Activated CD4-positive, alpha-beta memory T cell treated with anti-CD3 and anti-CD28 coated beads, Interleukin-2, amount 10 ng/mL, durations not matched to agents 7 days and 5 days (primary cell): ENCODE measurements at regions of chr2 and their contacts with region 1.

Region 1: DNA sequence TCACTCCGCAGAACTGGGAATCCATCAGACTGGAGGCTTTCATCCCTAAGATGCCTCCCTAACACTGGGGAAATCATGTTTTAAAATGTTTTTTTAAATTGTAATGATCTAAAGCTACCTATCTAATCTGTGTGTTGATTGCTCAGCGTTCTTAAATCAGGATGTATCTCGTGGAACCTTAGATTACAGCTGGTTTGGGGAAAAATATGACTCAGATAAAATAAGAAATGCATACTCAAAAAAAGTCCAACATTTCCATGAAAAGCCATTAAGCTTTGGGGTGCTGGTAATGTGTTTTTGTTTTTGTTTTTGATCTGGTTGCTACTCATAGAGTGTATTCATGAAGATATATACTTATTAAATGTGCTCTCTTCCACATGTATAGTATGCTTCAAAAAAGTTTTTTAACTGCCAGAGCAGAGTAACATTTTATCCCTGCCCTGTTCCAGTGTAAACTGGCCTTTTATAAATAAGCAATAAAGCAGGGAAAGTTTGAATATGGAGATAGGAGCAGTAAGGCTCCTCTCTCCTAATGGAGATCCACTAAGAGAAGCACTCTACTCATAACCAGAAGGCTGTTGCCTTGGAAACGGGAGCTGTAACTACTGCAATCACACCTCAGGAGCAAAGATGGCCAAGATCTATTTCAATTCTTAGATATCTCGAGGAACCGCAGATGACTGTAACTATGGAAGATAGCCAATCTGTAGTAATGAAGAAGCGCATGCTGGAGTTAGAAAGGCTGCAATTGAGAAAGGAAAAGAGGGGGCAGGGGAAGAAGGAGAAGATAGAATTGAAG is 41.6 kb downstream of the ANKRD44 start:
- DNase-seq: peak; percentile 39
- H3K4me3 Mint-ChIP-seq: no peak overlapping the region
- H3K27ac Mint-ChIP-seq: peak overlapping the region; percentile 17
- H3K4me1 Mint-ChIP-seq: peaks cover 89% of the 10 kb centered on the region
- H3K27me3 Mint-ChIP-seq: no peaks in the 10 kb centered on the region

Region 2: GRCh38 chr2:197278799-197279763 is 10.1 kb after region 1 on chr2:
- CTCF ChIA-PET with region 1: interaction called, 5 read pairs
- POLR2A ChIA-PET with region 1: interaction called, 11 read pairs
- DNase-seq: no peak
- H3K4me3 Mint-ChIP-seq: no peak overlapping the region
- H3K27ac Mint-ChIP-seq: peak overlapping the region; percentile 59
- H3K4me1 Mint-ChIP-seq: peaks cover 63% of the 10 kb centered on the region
- H3K27me3 Mint-ChIP-seq: no peaks in the 10 kb centered on the region

Region 3: GRCh38 chr2:197286805-197287598 is 18.0 kb after region 1 on chr2:
- CTCF ChIA-PET with region 1: interaction called, 5 read pairs
- POLR2A ChIA-PET with region 1: interaction called, 12 read pairs
- DNase-seq: peak; percentile 54
- H3K4me3 Mint-ChIP-seq: peak overlapping the region; percentile 62
- H3K27ac Mint-ChIP-seq: peak overlapping the region; percentile 96
- H3K4me1 Mint-ChIP-seq: peaks cover 76% of the 10 kb centered on the region
- H3K27me3 Mint-ChIP-seq: no peaks in the 10 kb centered on the region